ENCODE measurements at regions of chr2 and their contacts with region 1.

Region 1: GRCh38 chr2:85728883-85729824 is 24.6 kb upstream of the ATOH8 start:
- DNase-seq: peak; percentile 80
- ATAC-seq: peak; percentile 93
- H3K4me3 Mint-ChIP-seq: no peak overlapping the region
- H3K27ac Mint-ChIP-seq: no peak overlapping the region
- H3K4me1 Mint-ChIP-seq: peaks cover 9% of the 10 kb centered on the region
- H3K27me3 Mint-ChIP-seq: peaks cover 23% of the 10 kb centered on the region

Region 2: GRCh38 chr2:85595301-85596025 is 133.7 kb before region 1 on chr2 and contains the start of gene RNF181:
- CTCF ChIA-PET with region 1: no interaction called
- POLR2A ChIA-PET with region 1: no interaction called
- DNase-seq: peak; percentile 96
- ATAC-seq: peak; percentile 100
- H3K4me3 Mint-ChIP-seq: peak within 1 kb of the TSS; percentile 100
- H3K27ac Mint-ChIP-seq: peak within 1 kb of the TSS; percentile 97
- H3K4me1 Mint-ChIP-seq: peaks cover 37% of the 10 kb centered on the region
- H3K27me3 Mint-ChIP-seq: no peaks in the 10 kb centered on the region
- total RNA-seq, gene RNF181: 91.0 to 104 TPM

Region 3: GRCh38 chr2:85678794-85679672 is 50.1 kb before region 1 on chr2:
- CTCF ChIA-PET with region 1: interaction called, 18 read pairs
- POLR2A ChIA-PET with region 1: no interaction called
- DNase-seq: peak; percentile 84
- ATAC-seq: peak; percentile 91
- H3K4me3 Mint-ChIP-seq: no peak overlapping the region
- H3K27ac Mint-ChIP-seq: no peak overlapping the region
- H3K4me1 Mint-ChIP-seq: peaks cover 26% of the 10 kb centered on the region
- H3K27me3 Mint-ChIP-seq: peaks cover 3% of the 10 kb centered on the region

Region 4: GRCh38 chr2:85712849-85713602 is 16.1 kb before region 1 on chr2:
- CTCF ChIA-PET with region 1: interaction called, 25 read pairs
- POLR2A ChIA-PET with region 1: no interaction called
- DNase-seq: no peak
- ATAC-seq: no peak
- H3K4me3 Mint-ChIP-seq: no peak overlapping the region
- H3K27ac Mint-ChIP-seq: no peak overlapping the region
- H3K4me1 Mint-ChIP-seq: peaks cover 44% of the 10 kb centered on the region
- H3K27me3 Mint-ChIP-seq: peaks cover 11% of the 10 kb centered on the region

Region 5: GRCh38 chr2:85741833-85742455 is 12.8 kb after region 1 on chr2:
- CTCF ChIA-PET with region 1: interaction called, 19 read pairs
- POLR2A ChIA-PET with region 1: no interaction called
- DNase-seq: no peak
- ATAC-seq: no peak
- H3K4me3 Mint-ChIP-seq: no peak overlapping the region
- H3K27ac Mint-ChIP-seq: no peak overlapping the region
- H3K4me1 Mint-ChIP-seq: no peaks in the 10 kb centered on the region
- H3K27me3 Mint-ChIP-seq: peaks cover 62% of the 10 kb centered on the region

Region 6: GRCh38 chr2:85750587-85751575 is 21.7 kb after region 1 on chr2:
- CTCF ChIA-PET with region 1: interaction called, 19 read pairs
- POLR2A ChIA-PET with region 1: no interaction called
- DNase-seq: peak; percentile 72
- ATAC-seq: peak; percentile 52
- H3K4me3 Mint-ChIP-seq: no peak overlapping the region
- H3K27ac Mint-ChIP-seq: no peak overlapping the region
- H3K4me1 Mint-ChIP-seq: peaks cover 15% of the 10 kb centered on the region
- H3K27me3 Mint-ChIP-seq: peaks cover 69% of the 10 kb centered on the region

Region 7: DNA sequence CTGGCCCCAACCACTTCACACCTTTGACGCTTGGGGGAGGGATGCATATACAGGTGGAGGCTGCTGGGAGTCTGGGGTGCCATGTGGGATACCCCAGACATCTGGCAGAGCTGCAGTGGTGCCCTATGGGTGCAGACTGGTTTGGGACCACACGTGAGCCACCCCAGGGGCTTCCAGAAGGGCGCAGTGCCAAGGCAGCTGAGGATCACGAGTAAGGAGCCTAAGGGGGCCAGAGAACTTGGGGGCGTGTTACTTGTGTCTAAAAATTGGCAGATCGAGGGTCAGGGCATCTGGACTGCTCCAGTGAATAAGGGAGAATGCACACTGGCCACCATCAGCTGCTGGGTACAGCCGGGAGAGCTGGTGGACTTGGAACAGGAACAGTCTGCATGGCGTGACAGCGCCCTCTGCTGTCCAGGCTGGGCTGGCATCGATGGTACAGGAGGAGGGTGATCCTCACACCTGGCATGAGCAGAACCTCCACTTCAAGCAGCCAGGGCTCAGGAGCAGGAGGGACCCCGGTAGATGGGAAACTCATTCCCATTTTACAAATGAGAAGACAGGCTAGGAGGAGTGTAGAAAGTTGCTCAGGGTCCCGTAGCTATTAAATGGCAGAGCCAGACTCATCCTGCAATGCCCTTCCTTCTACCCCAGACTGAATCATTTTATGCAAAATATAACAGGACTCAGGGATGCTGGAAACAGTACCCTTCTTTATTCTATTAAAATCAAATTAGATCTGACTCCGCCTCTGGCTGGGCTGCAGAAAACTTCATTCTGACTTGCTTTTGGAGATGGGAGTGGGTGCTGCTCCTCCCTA is 85.0 kb after region 1 on chr2:
- CTCF ChIA-PET with region 1: interaction called, 97 read pairs
- POLR2A ChIA-PET with region 1: no interaction called
- DNase-seq: peak; percentile 89
- ATAC-seq: peak; percentile 95
- H3K4me3 Mint-ChIP-seq: no peak overlapping the region
- H3K27ac Mint-ChIP-seq: no peak overlapping the region
- H3K4me1 Mint-ChIP-seq: no peaks in the 10 kb centered on the region
- H3K27me3 Mint-ChIP-seq: peaks cover 15% of the 10 kb centered on the region